Psoas muscle (tissue), 8 donors: ENCODE measurements at regions of chr17 and their contacts with region 1.

Region 1: GRCh38 chr17:42843358-42843934 is 934 bp upstream of the AOC2 start:
- DNase-seq: no peak
- ATAC-seq: peak; percentile 50 to 85 (median 74)
- H3K4me3 ChIP-seq: no peak overlapping the region
- H3K27ac ChIP-seq: no peak overlapping the region
- H3K4me1 ChIP-seq: no peaks in the 10 kb centered on the region
- H3K27me3 ChIP-seq: no peaks in the 10 kb centered on the region
- CTCF ChIP-seq: peak; percentile 93

Region 2: GRCh38 chr17:42928714-42929496 is 85.5 kb after region 1 on chr17:
- intact Hi-C with region 1: loop called in 1 of 2 experiments (anchors 5 kb)
- DNase-seq: peak in 1 of 2 donors; percentile 13
- ATAC-seq: peak; percentile 63 to 83 (median 75)
- H3K4me3 ChIP-seq: no peak overlapping the region
- H3K27ac ChIP-seq: peak overlapping the region; percentile 34
- H3K4me1 ChIP-seq: no peaks in the 10 kb centered on the region
- H3K27me3 ChIP-seq: no peaks in the 10 kb centered on the region
- CTCF ChIP-seq: peak; percentile 56

Region 3: DNA sequence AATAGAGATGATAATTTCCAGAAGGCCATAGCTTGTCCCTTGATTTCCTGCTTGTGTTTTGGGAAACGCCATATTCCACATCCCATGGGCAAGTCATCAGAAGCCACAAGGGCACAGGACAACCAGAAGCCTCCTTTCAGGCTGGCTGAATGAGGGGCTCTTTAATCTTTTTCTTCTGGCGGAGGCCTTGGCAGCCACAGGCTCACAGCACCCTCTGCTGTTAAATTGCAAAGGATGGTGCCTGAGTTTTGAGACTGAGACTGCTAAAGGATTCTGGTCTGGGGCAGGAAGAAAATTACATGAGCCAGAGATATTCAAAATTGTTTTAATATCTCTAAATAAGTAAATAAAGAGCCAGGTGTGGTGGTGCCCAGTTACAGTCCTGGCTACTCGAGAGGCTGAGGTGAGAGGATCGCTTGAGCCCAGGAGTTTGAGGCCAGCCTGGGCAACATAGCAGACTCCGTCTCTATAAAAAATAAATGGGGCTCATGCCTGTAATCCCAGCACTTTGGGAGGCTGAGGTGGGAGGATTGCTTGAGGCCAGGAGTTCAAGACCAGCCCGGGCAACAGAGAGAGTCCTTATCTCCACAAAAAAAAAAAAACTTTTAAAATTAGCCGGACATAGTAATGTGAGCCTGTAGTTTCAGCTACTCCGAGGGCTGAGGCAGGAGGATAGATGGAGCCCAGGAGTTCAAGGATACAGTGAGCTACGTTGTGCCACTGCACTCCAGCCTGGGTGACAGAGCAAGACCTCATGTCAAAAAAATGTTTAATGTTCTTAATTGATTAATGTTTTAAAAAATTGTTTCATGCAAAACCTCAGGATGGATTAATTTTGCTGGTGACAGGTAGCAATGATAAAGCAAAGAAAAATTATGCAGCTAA is 94.5 kb after region 1 on chr17:
- intact Hi-C with region 1: loop called (anchors 1 to 5 kb)
- DNase-seq: peak in 1 of 2 donors; percentile 17
- ATAC-seq: peak; percentile 57 to 77 (median 68)
- H3K4me3 ChIP-seq: no peak overlapping the region
- H3K27ac ChIP-seq: no peak overlapping the region
- H3K4me1 ChIP-seq: no peaks in the 10 kb centered on the region
- H3K27me3 ChIP-seq: no peaks in the 10 kb centered on the region
- CTCF ChIP-seq: peak; percentile 65